Right cardiac atrium (tissue), 5 donors: ENCODE measurements at regions of chr2 and their contacts with region 1.

Region 1: GRCh38 chr2:223465793-223466192 is 136.4 kb downstream of the SCG2 start:
- DNase-seq: peak; percentile 82 to 91 (median 85)
- ATAC-seq: peak; percentile 89 to 96
- H3K4me3 ChIP-seq: no peak overlapping the region
- H3K27ac ChIP-seq: no peak overlapping the region
- H3K4me1 ChIP-seq: peaks cover 2% of the 10 kb centered on the region
- H3K27me3 ChIP-seq: no peaks in the 10 kb centered on the region

Region 2: GRCh38 chr2:223537669-223538601 is 72.1 kb after region 1 on chr2:
- intact Hi-C with region 1: loop called in 1 of 4 experiments (anchors 10 kb)
- DNase-seq: no peak
- ATAC-seq: peak in 1 of 2 donors; percentile 24
- H3K4me3 ChIP-seq: no peak overlapping the region
- H3K27ac ChIP-seq: peak overlapping the region; percentile 32
- H3K4me1 ChIP-seq: peaks cover 2% of the 10 kb centered on the region
- H3K27me3 ChIP-seq: no peaks in the 10 kb centered on the region